ENCODE measurements at regions of chr21 and their contacts with region 1.

Region 1: GRCh38 chr21:40120940-40121575 is 253.8 kb downstream of the PCP4 start:
- DNase-seq: no peak
- ATAC-seq: peak in 2 of 4 donors; percentile 58
- H3K4me3 ChIP-seq: no peak overlapping the region
- H3K27ac ChIP-seq: no peak overlapping the region
- H3K4me1 ChIP-seq: no peaks in the 10 kb centered on the region
- H3K27me3 ChIP-seq: no peaks in the 10 kb centered on the region
- CTCF ChIP-seq: peak; percentile 51 to 82 (median 66)

Region 2: DNA sequence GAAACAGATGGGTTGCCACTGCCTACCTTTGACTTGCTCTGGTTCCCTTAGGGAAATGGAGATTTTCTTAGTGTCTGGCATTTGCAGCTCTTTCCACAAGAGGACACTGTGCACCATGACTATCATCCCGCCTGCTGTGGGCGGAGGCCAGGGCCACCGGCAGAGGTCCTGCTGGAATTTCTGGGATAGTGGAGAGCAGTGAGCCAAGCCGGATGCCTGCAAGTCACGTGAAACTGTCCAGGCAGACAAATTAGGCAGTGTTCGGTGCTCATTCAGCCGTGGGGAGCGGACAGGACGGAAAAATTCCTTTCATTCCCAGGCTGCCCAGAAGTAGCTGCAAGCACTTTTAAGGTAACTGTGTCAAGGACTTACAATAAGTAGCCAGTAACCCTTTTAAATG is 332.7 kb before region 1 on chr21:
- intact Hi-C with region 1: loop called in 2 of 3 experiments (anchors 5 to 10 kb)
- DNase-seq: peak; percentile 70 to 88 (median 73)
- ATAC-seq: peak; percentile 98 to 100 (median 100)
- H3K4me3 ChIP-seq: no peak overlapping the region
- H3K27ac ChIP-seq: peak overlapping the region in 1 of 4 donors; percentile 0
- H3K4me1 ChIP-seq: peaks cover 0 to 8% (median 0%) of the 10 kb centered on the region in 3 donors
- H3K27me3 ChIP-seq: no peaks in the 10 kb centered on the region
- CTCF ChIP-seq: peak; percentile 55 to 69 (median 66)

Region 3: GRCh38 chr21:39799178-39799577 is 321.9 kb before region 1 on chr21:
- intact Hi-C with region 1: loop called in 1 of 3 experiments (anchors 10 kb)
- DNase-seq: peak in 1 of 6 donors; percentile 22
- ATAC-seq: no peak
- H3K4me3 ChIP-seq: no peak overlapping the region
- H3K27ac ChIP-seq: no peak overlapping the region
- H3K4me1 ChIP-seq: no peaks in the 10 kb centered on the region
- H3K27me3 ChIP-seq: no peaks in the 10 kb centered on the region
- CTCF ChIP-seq: no peak

Region 4: DNA sequence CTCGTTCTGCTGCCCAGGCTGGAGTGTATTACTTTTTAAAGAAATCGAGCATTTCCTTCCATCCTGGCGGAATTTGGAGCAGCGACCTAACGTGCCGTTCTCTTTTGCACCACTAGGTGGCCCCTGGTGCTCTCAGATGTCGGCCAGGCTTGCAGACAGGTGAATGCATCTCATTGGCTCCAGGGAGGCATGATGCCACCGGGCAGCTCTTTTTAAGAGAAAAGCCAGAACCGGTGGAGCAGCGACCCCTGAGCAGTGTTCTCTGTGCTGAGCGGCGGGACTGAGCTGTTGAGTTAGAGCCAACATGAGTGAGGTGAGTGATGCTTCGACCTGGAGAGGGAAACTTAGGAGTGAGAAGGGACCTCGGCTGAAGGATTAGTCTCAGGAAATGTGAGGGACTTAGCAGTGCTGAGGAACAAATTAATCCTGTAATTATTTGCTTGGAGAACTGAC is 253.8 kb before region 1 on chr21 and contains the start of gene PCP4:
- intact Hi-C with region 1: loop called in 2 of 3 experiments (anchors 5 to 10 kb)
- DNase-seq: peak; percentile 19 to 80 (median 66)
- ATAC-seq: peak in 3 of 4 donors; percentile 90 to 93 (median 92)
- H3K4me3 ChIP-seq: no peak within 1 kb of the TSS
- H3K27ac ChIP-seq: no peak within 1 kb of the TSS
- H3K4me1 ChIP-seq: no peaks in the 10 kb centered on the region
- H3K27me3 ChIP-seq: no peaks in the 10 kb centered on the region
- CTCF ChIP-seq: peak; percentile 59 to 77 (median 72)
- total RNA-seq, gene PCP4: 0.92 to 3.6 (median 2.7) TPM